ENCODE measurements at regions of chr7 and their contacts with region 1.

Region 1: GRCh38 chr7:38222481-38223096 is 44.5 kb downstream of the STARD3NL start:
- DNase-seq: peak in 3 of 9 experiments; percentile 43 to 87 (median 80)
- ATAC-seq: peak; percentile 65
- H3K4me3 ChIP-seq: no peak overlapping the region
- H3K4me3 Mint-ChIP-seq: no peak overlapping the region
- H3K27ac ChIP-seq: peak overlapping the region in 1 of 2 experiments; percentile 85
- H3K27ac Mint-ChIP-seq: peak overlapping the region; percentile 72
- H3K4me1 ChIP-seq: peaks cover 29% of the 10 kb centered on the region
- H3K4me1 Mint-ChIP-seq: peaks cover 56% of the 10 kb centered on the region
- H3K27me3 ChIP-seq: no peaks in the 10 kb centered on the region
- H3K27me3 Mint-ChIP-seq: no peaks in the 10 kb centered on the region
- CTCF ChIP-seq: peak; percentile 79

Region 2: GRCh38 chr7:37901236-37901827 is 321.3 kb before region 1 on chr7:
- CTCF ChIA-PET with region 1: no interaction called
- POLR2A ChIA-PET with region 1: no interaction called
- intact Hi-C with region 1: loop called in 1 of 2 experiments (anchors 2 kb)
- DNase-seq: peak in 2 of 9 experiments; percentile 23 to 40
- ATAC-seq: no peak
- H3K4me3 ChIP-seq: no peak overlapping the region
- H3K4me3 Mint-ChIP-seq: no peak overlapping the region
- H3K27ac ChIP-seq: no peak overlapping the region
- H3K27ac Mint-ChIP-seq: no peak overlapping the region
- H3K4me1 ChIP-seq: no peaks in the 10 kb centered on the region
- H3K4me1 Mint-ChIP-seq: no peaks in the 10 kb centered on the region
- H3K27me3 ChIP-seq: no peaks in the 10 kb centered on the region
- H3K27me3 Mint-ChIP-seq: peaks cover 2% of the 10 kb centered on the region
- CTCF ChIP-seq: no peak

Region 3: GRCh38 chr7:38107486-38107893 is 115.1 kb before region 1 on chr7:
- CTCF ChIA-PET with region 1: interaction called, 66 read pairs
- POLR2A ChIA-PET with region 1: no interaction called
- intact Hi-C with region 1: loop called (anchors 1 kb)
- DNase-seq: peak; percentile 33 to 80 (median 71)
- ATAC-seq: peak; percentile 87
- H3K4me3 ChIP-seq: no peak overlapping the region
- H3K4me3 Mint-ChIP-seq: no peak overlapping the region
- H3K27ac ChIP-seq: no peak overlapping the region
- H3K27ac Mint-ChIP-seq: no peak overlapping the region
- H3K4me1 ChIP-seq: no peaks in the 10 kb centered on the region
- H3K4me1 Mint-ChIP-seq: peaks cover 2% of the 10 kb centered on the region
- H3K27me3 ChIP-seq: peaks cover 0 to 2% of the 10 kb centered on the region in 2 experiments
- H3K27me3 Mint-ChIP-seq: peaks cover 8% of the 10 kb centered on the region
- CTCF ChIP-seq: peak; percentile 89

Region 4: GRCh38 chr7:38232502-38233366 is 10.1 kb after region 1 on chr7:
- CTCF ChIA-PET with region 1: interaction called, 68 read pairs
- POLR2A ChIA-PET with region 1: interaction called, 14 read pairs
- intact Hi-C with region 1: loop called in 1 of 2 experiments (anchors 1 kb)
- DNase-seq: peak; percentile 53 to 95 (median 72)
- ATAC-seq: peak; percentile 77
- H3K4me3 ChIP-seq: peak overlapping the region in 1 of 2 experiments; percentile 17
- H3K4me3 Mint-ChIP-seq: peak overlapping the region; percentile 69
- H3K27ac ChIP-seq: peak overlapping the region; percentile 36 to 78
- H3K27ac Mint-ChIP-seq: peak overlapping the region; percentile 94
- H3K4me1 ChIP-seq: peaks cover 45% of the 10 kb centered on the region
- H3K4me1 Mint-ChIP-seq: peaks cover 89% of the 10 kb centered on the region
- H3K27me3 ChIP-seq: no peaks in the 10 kb centered on the region
- H3K27me3 Mint-ChIP-seq: no peaks in the 10 kb centered on the region
- CTCF ChIP-seq: no peak

Region 5: DNA sequence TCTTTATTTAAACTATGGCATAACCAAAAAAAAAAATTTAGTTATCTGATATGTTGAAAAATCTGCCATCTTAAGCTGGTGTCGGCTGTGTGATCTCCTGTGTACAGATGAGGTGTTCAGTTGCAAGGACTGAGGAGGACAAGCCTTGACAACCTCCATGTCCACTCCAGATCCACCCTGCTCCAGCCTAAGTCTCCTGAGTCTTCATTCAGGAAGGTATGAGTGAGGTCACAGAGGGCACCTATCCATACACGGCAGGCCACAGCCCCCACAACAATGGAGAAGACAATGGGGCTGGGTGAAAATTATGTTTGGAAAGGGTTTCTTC is 34.7 kb after region 1 on chr7:
- CTCF ChIA-PET with region 1: no interaction called
- POLR2A ChIA-PET with region 1: no interaction called
- intact Hi-C with region 1: no loop called
- DNase-seq: no peak
- ATAC-seq: no peak
- H3K4me3 ChIP-seq: no peak overlapping the region
- H3K4me3 Mint-ChIP-seq: no peak overlapping the region
- H3K27ac ChIP-seq: no peak overlapping the region
- H3K27ac Mint-ChIP-seq: peak overlapping the region; percentile 41
- H3K4me1 ChIP-seq: no peaks in the 10 kb centered on the region
- H3K4me1 Mint-ChIP-seq: peaks cover 7% of the 10 kb centered on the region
- H3K27me3 ChIP-seq: no peaks in the 10 kb centered on the region
- H3K27me3 Mint-ChIP-seq: no peaks in the 10 kb centered on the region
- CTCF ChIP-seq: no peak

Region 6: DNA sequence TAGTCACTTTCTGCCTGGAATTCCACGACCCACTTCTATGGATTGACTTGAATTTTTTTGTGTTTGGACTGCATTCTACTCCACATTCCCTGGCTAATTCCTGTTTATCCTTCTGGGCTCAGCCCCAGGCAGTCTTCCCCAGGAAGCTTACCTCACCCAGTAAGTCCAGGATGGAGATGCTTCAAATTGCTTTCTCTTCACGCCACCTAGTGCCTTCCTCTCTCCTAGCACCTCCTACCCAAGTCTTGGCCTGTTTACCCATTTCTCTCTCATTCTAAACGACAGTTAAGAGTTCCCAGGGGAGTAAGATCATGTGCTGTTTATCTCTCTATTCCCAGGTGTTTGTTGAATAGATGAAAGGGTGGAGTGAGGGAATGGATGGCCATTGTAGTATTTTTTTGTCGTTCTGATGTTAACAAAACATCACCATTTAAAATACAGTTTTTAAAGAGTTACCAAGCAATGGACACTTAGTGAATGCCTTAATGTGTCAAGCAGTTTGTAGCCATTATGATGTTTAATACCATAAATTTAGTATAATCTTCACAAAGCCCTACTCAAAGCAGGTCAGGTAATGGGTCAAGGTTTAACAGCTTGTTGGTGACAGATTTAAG is 96.3 kb after region 1 on chr7:
- CTCF ChIA-PET with region 1: interaction called, 76 read pairs
- POLR2A ChIA-PET with region 1: interaction called, 3 read pairs
- intact Hi-C with region 1: no loop called
- DNase-seq: peak in 2 of 9 experiments; percentile 61 to 74
- ATAC-seq: peak; percentile 30
- H3K4me3 ChIP-seq: peak overlapping the region in 1 of 2 experiments; percentile 50
- H3K4me3 Mint-ChIP-seq: peak overlapping the region; percentile 78
- H3K27ac ChIP-seq: peak overlapping the region in 1 of 2 experiments; percentile 81
- H3K27ac Mint-ChIP-seq: peak overlapping the region; percentile 91
- H3K4me1 ChIP-seq: peaks cover 37% of the 10 kb centered on the region
- H3K4me1 Mint-ChIP-seq: peaks cover 57% of the 10 kb centered on the region
- H3K27me3 ChIP-seq: no peaks in the 10 kb centered on the region
- H3K27me3 Mint-ChIP-seq: no peaks in the 10 kb centered on the region
- CTCF ChIP-seq: peak; percentile 39

Region 7: DNA sequence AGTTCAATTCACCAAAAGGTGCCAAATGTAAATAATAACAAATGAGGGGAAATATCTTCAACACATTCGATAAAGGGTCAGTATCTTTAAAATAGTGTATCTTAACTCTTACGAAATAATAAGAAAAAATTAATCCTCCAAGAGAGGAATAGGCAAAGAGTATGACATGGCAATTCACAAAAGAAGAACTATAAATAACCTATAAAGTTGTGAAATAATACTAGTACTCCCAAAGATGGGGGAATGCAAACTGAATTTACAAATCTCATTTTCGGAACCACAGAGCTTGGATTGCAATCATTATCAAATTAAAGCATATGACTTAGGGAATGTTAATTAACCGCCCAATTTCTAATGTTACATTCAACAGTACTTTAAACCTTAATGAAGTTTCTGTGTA is 129.0 kb after region 1 on chr7:
- CTCF ChIA-PET with region 1: interaction called, 95 read pairs
- POLR2A ChIA-PET with region 1: interaction called, 3 read pairs
- intact Hi-C with region 1: no loop called
- DNase-seq: no peak
- ATAC-seq: no peak
- H3K4me3 ChIP-seq: peak overlapping the region in 1 of 2 experiments; percentile 36
- H3K4me3 Mint-ChIP-seq: peak overlapping the region; percentile 89
- H3K27ac ChIP-seq: peak overlapping the region in 1 of 2 experiments; percentile 4
- H3K27ac Mint-ChIP-seq: peak overlapping the region; percentile 95
- H3K4me1 ChIP-seq: peaks cover 5% of the 10 kb centered on the region
- H3K4me1 Mint-ChIP-seq: peaks cover 62% of the 10 kb centered on the region
- H3K27me3 ChIP-seq: no peaks in the 10 kb centered on the region
- H3K27me3 Mint-ChIP-seq: no peaks in the 10 kb centered on the region
- CTCF ChIP-seq: no peak

Measured in CD8-positive, alpha-beta T cell (primary cell).